ENCODE measurements at regions of chr6 and their contacts with region 1.

Region 1: GRCh38 chr6:12391472-12391871 is 101.3 kb downstream of the EDN1 start:
- DNase-seq: no peak
- H3K4me3 ChIP-seq: no peak overlapping the region
- H3K27ac ChIP-seq: no peak overlapping the region
- H3K4me1 ChIP-seq: peaks cover 0 to 10% (median 0%) of the 10 kb centered on the region in 4 donors
- H3K27me3 ChIP-seq: no peaks in the 10 kb centered on the region
- CTCF ChIP-seq: no peak
- EP300 ChIP-seq: no peak
- POLR2A ChIP-seq: no peak

Region 2: GRCh38 chr6:12363651-12364381 is 27.7 kb before region 1 on chr6:
- in situ Hi-C with region 1: no loop called
- intact Hi-C with region 1: loop called (anchors 1 kb)
- DNase-seq: peak; percentile 69
- H3K4me3 ChIP-seq: peak overlapping the region in 1 of 4 donors; percentile 16
- H3K27ac ChIP-seq: peak overlapping the region; percentile 80 to 85 (median 84)
- H3K4me1 ChIP-seq: peaks cover 0 to 53% (median 20%) of the 10 kb centered on the region in 4 donors
- H3K27me3 ChIP-seq: no peaks in the 10 kb centered on the region
- CTCF ChIP-seq: no peak
- EP300 ChIP-seq: peak; percentile 46
- POLR2A ChIP-seq: peak; percentile 63

Region 3: GRCh38 chr6:13548500-13549210 is 1157.2 kb after region 1 on chr6:
- in situ Hi-C with region 1: no loop called
- intact Hi-C with region 1: no loop called
- DNase-seq: no peak
- H3K4me3 ChIP-seq: no peak overlapping the region
- H3K27ac ChIP-seq: no peak overlapping the region
- H3K4me1 ChIP-seq: peaks cover 0 to 3% (median 0%) of the 10 kb centered on the region in 4 donors
- H3K27me3 ChIP-seq: no peaks in the 10 kb centered on the region
- CTCF ChIP-seq: no peak
- EP300 ChIP-seq: no peak
- POLR2A ChIP-seq: no peak